Right lobe of liver (tissue), 6 donors: ENCODE measurements at regions of chr9 and their contacts with region 1.

Region 1: DNA sequence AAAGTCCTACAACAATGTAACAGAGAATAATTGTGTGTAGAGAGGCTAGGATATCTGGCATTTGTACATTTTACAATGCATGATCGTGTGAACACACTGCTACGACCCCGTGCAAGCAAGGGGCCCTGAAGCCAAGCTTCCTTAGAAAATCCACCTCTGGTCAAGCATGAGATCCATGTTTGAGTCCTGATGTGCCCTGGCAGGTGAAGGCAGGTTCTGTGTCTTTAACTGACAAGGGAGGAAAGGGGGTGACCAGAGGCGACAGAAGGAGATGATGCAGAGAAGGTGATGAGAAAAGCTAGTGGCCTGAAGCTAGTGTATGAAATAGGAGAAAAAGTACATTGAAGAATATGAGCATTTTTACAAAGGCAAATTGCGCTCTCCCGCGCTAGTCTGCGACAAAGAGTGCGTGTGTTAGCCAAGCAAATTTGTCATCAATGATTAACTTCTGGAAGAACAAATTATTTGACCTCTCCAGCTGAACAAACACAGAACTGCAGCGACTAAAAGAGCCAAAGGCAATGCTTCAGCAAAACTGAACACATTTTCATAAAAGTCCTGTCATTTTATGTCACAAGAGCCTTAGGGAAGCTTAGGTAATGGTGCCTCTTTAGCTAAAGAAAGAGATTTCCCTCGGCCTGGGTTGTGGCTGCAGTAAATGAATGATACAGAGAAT is 101.7 kb upstream of the DAPK1 start:
- DNase-seq: peak in 1 of 3 donors; percentile 64
- ATAC-seq: peak; percentile 96 to 98 (median 96)
- H3K4me3 ChIP-seq: no peak overlapping the region
- H3K27ac ChIP-seq: peak overlapping the region; percentile 65 to 93 (median 73)
- H3K4me1 ChIP-seq: peaks cover 0 to 16% (median 7%) of the 10 kb centered on the region in 4 donors
- H3K27me3 ChIP-seq: no peaks in the 10 kb centered on the region
- CTCF ChIP-seq: peak in 1 of 4 donors; percentile 27
- POLR2A ChIP-seq: no peak

Region 2: GRCh38 chr9:87342743-87343142 is 53.2 kb before region 1 on chr9:
- intact Hi-C with region 1: loop called in 1 of 2 experiments (anchors 10 kb)
- DNase-seq: peak in 1 of 3 donors; percentile 51
- ATAC-seq: peak; percentile 53 to 65 (median 62)
- H3K4me3 ChIP-seq: no peak overlapping the region
- H3K27ac ChIP-seq: no peak overlapping the region
- H3K4me1 ChIP-seq: peaks cover 0 to 2% (median 0%) of the 10 kb centered on the region in 4 donors
- H3K27me3 ChIP-seq: no peaks in the 10 kb centered on the region
- CTCF ChIP-seq: no peak
- POLR2A ChIP-seq: no peak